T-cell (primary cell): ENCODE measurements at regions of chr5 and their contacts with region 1.

Region 1: GRCh38 chr5:111254613-111255012 is 30.4 kb downstream of the CAMK4 start:
- DNase-seq: peak in 31 of 35 experiments; percentile 35 to 89 (median 61)
- ATAC-seq: peak; percentile 59 to 93 (median 60)
- H3K4me3 ChIP-seq: no peak overlapping the region
- H3K4me3 Mint-ChIP-seq: peak overlapping the region; percentile 30 to 67 (median 46)
- H3K27ac ChIP-seq: peak overlapping the region; percentile 69
- H3K27ac Mint-ChIP-seq: peak overlapping the region; percentile 86 to 88
- H3K4me1 ChIP-seq: peaks cover 27 to 64% of the 10 kb centered on the region in 2 experiments
- H3K4me1 Mint-ChIP-seq: peaks cover 76 to 88% (median 81%) of the 10 kb centered on the region in 3 donors
- H3K27me3 ChIP-seq: no peaks in the 10 kb centered on the region
- H3K27me3 Mint-ChIP-seq: no peaks in the 10 kb centered on the region

Region 2: GRCh38 chr5:111223889-111224563 is 30.6 kb before region 1 on chr5 and contains the start of gene CAMK4:
- CTCF ChIA-PET with region 1: interaction called, 5 to 17 read pairs
- POLR2A ChIA-PET with region 1: interaction called, 5 read pairs
- DNase-seq: peak; percentile 68 to 93 (median 82)
- ATAC-seq: peak; percentile 85 to 90 (median 86)
- H3K4me3 ChIP-seq: peak within 1 kb of the TSS; percentile 77 to 94
- H3K4me3 Mint-ChIP-seq: peak within 1 kb of the TSS; percentile 97 to 98 (median 98)
- H3K27ac ChIP-seq: peak within 1 kb of the TSS; percentile 78
- H3K27ac Mint-ChIP-seq: peak within 1 kb of the TSS; percentile 97 to 98
- H3K4me1 ChIP-seq: peaks cover 18 to 33% of the 10 kb centered on the region in 2 experiments
- H3K4me1 Mint-ChIP-seq: peaks cover 28 to 47% (median 35%) of the 10 kb centered on the region in 3 donors
- H3K27me3 ChIP-seq: no peaks in the 10 kb centered on the region
- H3K27me3 Mint-ChIP-seq: no peaks in the 10 kb centered on the region
- total RNA-seq, gene CAMK4: 120 to 274 (median 243) TPM

Region 3: DNA sequence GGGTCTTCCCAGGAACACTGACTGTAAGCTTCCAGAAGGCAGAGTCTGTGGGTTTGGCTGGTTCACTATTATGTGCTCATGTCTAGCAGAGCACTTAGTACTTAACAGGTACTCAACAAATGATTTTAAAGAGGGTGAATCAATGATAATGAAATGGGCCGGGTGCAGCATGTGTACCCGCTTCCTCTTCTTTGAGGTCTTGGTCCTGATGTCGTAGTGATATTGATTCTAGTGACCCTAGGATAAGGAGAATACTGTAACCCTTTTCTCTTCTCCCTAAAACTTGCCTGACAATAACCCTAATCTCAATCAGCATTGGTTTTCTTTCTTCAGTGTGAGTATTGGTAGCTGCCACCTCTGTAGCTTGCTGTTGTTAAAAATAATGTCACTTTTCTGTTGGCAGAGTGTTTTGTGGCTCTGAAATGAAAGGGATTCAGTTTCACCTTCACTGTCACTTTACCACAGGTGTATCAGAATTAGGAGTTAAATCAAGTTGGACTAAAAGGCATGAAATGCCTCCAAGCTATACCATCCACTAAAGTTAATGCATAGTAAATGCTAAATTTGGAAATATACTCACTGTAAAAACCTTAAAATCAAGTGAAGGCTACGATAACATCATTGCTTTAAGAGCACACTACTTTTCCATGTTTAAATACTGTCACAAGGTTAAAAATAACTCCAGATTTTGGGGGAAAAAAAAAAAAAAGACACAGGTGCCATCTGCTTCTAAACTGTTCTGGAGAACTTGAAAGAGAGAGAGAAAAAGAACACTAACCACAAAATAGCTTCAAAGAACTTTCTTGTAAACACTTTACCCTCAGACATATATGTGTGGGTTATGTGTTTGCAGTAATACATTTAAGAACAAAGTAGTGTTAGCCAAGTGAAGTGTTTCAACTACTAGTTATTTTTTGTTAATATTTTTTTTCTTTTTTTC is 24.5 kb before region 1 on chr5:
- CTCF ChIA-PET with region 1: interaction called, 4 to 17 read pairs
- POLR2A ChIA-PET with region 1: interaction called, 3 to 4 read pairs
- DNase-seq: peak in 1 of 35 experiments; percentile 73
- ATAC-seq: peak; percentile 25 to 68 (median 48)
- H3K4me3 ChIP-seq: peak overlapping the region; percentile 19 to 66
- H3K4me3 Mint-ChIP-seq: peak overlapping the region; percentile 82 to 98 (median 84)
- H3K27ac ChIP-seq: peak overlapping the region; percentile 78
- H3K27ac Mint-ChIP-seq: peak overlapping the region; percentile 100
- H3K4me1 ChIP-seq: peaks cover 43 to 84% of the 10 kb centered on the region in 2 experiments
- H3K4me1 Mint-ChIP-seq: peaks cover 69 to 91% (median 79%) of the 10 kb centered on the region in 3 donors
- H3K27me3 ChIP-seq: no peaks in the 10 kb centered on the region
- H3K27me3 Mint-ChIP-seq: no peaks in the 10 kb centered on the region

Region 4: DNA sequence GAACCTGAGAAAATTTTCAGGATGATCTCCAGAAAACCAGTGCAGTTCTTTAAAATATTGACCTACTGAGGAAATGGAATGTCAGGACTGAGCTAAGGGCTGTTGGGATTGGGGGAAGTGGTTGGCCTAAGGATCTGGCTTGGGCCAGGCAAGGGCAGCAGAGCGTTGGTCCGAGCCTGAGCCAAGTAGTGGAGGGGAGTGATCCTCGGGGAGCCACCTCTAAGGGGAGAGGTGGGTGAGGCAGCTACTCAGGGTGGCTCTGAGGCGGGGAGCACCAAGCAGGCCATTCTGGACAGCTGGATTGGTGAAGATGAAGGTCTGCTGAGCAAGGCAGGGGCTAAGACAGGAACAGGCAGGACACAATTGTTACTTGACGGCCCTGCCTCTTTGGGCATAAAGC is 19.0 kb before region 1 on chr5:
- CTCF ChIA-PET with region 1: interaction called, 4 to 15 read pairs
- POLR2A ChIA-PET with region 1: interaction called, 4 to 6 read pairs
- DNase-seq: no peak
- ATAC-seq: no peak
- H3K4me3 ChIP-seq: peak overlapping the region in 1 of 2 donors; percentile 15
- H3K4me3 Mint-ChIP-seq: peak overlapping the region; percentile 64 to 82 (median 72)
- H3K27ac ChIP-seq: peak overlapping the region; percentile 78
- H3K27ac Mint-ChIP-seq: peak overlapping the region; percentile 95 to 96
- H3K4me1 ChIP-seq: peaks cover 55 to 91% of the 10 kb centered on the region in 2 experiments
- H3K4me1 Mint-ChIP-seq: peaks cover 90 to 94% (median 92%) of the 10 kb centered on the region in 3 donors
- H3K27me3 ChIP-seq: no peaks in the 10 kb centered on the region
- H3K27me3 Mint-ChIP-seq: no peaks in the 10 kb centered on the region

Region 5: GRCh38 chr5:111313017-111313724 is 58.6 kb after region 1 on chr5:
- CTCF ChIA-PET with region 1: no interaction called
- POLR2A ChIA-PET with region 1: no interaction called
- DNase-seq: no peak
- ATAC-seq: peak; percentile 41 to 63 (median 51)
- H3K4me3 ChIP-seq: no peak overlapping the region
- H3K4me3 Mint-ChIP-seq: peak overlapping the region in 1 of 3 donors; percentile 2
- H3K27ac ChIP-seq: no peak overlapping the region
- H3K27ac Mint-ChIP-seq: peak overlapping the region; percentile 25 to 29
- H3K4me1 ChIP-seq: peaks cover 8 to 20% of the 10 kb centered on the region in 2 experiments
- H3K4me1 Mint-ChIP-seq: peaks cover 78 to 92% (median 84%) of the 10 kb centered on the region in 3 donors
- H3K27me3 ChIP-seq: no peaks in the 10 kb centered on the region
- H3K27me3 Mint-ChIP-seq: no peaks in the 10 kb centered on the region

Region 6: DNA sequence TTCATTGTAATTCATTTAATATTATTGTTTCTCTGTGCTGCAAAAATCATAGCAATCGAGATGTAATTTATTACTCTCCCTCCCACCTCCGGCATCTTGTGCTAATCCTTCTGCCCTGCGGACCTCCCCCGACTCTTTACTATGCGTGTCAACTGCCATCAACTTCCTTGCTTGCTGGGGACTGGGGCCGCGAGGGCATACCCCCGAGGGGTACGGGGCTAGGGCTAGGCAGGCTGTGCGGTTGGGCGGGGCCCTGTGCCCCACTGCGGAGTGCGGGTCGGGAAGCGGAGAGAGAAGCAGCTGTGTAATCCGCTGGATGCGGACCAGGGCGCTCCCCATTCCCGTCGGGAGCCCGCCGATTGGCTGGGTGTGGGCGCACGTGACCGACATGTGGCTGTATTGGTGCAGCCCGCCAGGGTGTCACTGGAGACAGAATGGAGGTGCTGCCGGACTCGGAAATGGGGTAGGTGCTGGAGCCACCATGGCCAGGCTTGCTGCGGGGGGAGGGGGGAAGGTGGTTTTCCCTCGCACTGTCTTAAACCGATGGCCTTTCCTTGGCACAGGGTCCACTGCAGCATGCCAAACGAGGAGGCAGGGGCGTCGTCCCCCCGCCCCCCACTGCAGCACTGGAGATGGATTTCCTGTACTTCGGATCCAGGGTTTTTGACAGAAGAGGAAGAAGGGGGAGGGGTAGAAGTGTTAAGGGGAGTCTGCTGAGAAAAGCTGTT is 1483.0 kb after region 1 on chr5 and contains the start of gene APC:
- CTCF ChIA-PET with region 1: no interaction called
- POLR2A ChIA-PET with region 1: no interaction called
- DNase-seq: peak; percentile 40 to 90 (median 74)
- ATAC-seq: peak; percentile 85 to 98 (median 94)
- H3K4me3 ChIP-seq: peak within 1 kb of the TSS; percentile 58 to 77
- H3K4me3 Mint-ChIP-seq: peak within 1 kb of the TSS; percentile 90 to 96 (median 94)
- H3K27ac ChIP-seq: no peak within 1 kb of the TSS
- H3K27ac Mint-ChIP-seq: peak within 1 kb of the TSS; percentile 28 to 82
- H3K4me1 ChIP-seq: peaks cover 8 to 13% of the 10 kb centered on the region in 2 experiments
- H3K4me1 Mint-ChIP-seq: peaks cover 34 to 39% (median 34%) of the 10 kb centered on the region in 3 donors
- H3K27me3 ChIP-seq: no peaks in the 10 kb centered on the region
- H3K27me3 Mint-ChIP-seq: no peaks in the 10 kb centered on the region
- total RNA-seq, gene APC: 33.0 to 45.0 (median 39.7) TPM